ENCODE measurements at regions of chr6 and their contacts with region 1.

Region 1: DNA sequence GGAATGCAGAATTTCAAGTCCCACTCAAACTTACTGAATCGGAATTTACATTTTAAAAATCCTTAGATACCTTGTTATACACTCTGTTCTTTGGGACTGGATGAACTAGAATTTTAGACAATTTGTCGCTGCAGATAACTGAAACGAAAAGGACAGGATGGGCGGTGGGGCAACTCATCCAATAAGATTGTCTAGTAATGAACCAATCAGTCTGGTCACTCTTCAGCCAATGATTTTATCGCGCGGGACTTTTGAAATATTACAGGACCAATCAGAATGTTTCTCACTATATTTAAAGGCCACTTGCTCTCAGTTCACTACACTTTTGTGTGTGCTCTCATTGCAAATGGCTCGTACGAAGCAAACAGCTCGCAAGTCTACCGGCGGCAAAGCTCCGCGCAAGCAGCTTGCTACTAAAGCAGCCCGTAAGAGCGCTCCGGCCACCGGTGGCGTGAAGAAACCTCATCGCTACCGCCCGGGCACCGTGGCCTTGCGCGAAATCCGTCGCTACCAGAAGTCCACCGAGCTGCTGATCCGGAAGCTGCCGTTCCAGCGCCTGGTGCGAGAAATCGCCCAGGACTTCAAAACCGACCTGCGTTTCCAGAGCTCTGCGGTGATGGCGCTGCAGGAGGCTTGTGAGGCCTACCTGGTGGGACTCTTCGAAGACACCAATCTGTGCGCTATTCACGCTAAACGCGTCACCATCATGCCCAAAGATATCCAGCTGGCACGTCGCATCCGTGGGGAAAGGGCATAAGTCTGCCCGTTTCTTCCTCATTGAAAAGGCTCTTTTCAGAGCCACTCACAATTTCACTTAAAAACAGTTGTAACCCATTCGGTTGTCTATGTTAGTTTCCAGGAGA is 41.9 kb upstream of the HFE start:
- DNase-seq: peak; percentile 77
- H3K4me3 ChIP-seq: peak overlapping the region; percentile 57 to 60
- H3K27ac ChIP-seq: peak overlapping the region; percentile 79 to 97
- H3K4me1 ChIP-seq: peaks cover 0 to 12% of the 10 kb centered on the region in 2 experiments; a peak in 2 of 4 replicates
- H3K27me3 ChIP-seq: no peaks in the 10 kb centered on the region
- CTCF ChIP-seq: peak; percentile 37
- EP300 ChIP-seq: peak in 1 of 2 experiments; percentile 49; a peak in 1 of 4 replicates
- RAD21 ChIP-seq: no peak

Region 2: DNA sequence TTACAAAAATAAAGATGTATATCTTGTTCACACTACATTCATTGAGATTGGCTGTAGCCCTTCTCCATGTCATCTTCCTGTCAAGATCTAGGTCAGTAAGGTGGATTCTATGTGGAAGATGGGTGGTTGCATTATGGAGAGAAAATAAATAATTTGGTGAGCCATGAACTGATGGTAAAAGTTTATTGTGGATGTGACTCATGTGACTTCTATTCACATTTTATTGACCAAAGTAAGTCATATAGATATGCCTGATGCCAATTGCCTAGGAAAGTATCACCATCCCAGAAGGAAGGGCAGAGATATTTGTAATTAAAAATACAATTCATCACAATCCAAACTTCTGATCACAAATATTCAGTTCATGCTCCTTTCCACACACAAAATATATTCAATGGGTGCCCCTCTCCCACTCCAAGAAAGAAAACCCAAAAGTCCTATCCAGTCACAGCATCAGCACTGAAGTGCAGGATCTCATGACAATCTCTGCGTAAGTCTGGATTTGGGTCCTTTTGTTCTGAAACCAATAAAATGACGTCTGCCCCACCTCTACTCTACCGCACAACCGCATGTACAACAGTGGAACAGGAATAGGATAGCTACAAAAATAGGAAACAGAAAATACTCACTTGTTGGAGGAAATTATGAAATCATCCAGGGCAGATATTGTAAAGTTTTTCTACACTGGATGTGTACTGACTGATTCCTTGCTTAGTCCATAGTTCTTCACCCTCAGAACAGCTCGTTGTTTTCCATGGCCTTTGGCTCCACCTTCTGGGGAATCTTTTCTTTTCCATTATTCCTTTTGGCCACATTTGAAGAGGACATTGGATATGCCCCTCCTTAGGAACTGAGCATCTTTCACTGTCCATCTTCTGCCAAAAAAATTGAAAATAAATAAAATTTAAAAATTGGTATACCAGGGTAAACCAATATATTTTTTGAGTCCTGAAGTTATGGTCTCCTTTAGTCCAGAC is 155.1 kb before region 1 on chr6:
- CTCF ChIA-PET with region 1: no interaction called
- POLR2A ChIA-PET with region 1: no interaction called
- DNase-seq: peak; percentile 58
- H3K4me3 ChIP-seq: no peak overlapping the region; a peak in 1 of 4 replicates
- H3K27ac ChIP-seq: no peak overlapping the region
- H3K4me1 ChIP-seq: no peaks in the 10 kb centered on the region
- H3K27me3 ChIP-seq: no peaks in the 10 kb centered on the region
- CTCF ChIP-seq: peak; percentile 57
- EP300 ChIP-seq: no peak
- RAD21 ChIP-seq: peak; percentile 95

Region 3: DNA sequence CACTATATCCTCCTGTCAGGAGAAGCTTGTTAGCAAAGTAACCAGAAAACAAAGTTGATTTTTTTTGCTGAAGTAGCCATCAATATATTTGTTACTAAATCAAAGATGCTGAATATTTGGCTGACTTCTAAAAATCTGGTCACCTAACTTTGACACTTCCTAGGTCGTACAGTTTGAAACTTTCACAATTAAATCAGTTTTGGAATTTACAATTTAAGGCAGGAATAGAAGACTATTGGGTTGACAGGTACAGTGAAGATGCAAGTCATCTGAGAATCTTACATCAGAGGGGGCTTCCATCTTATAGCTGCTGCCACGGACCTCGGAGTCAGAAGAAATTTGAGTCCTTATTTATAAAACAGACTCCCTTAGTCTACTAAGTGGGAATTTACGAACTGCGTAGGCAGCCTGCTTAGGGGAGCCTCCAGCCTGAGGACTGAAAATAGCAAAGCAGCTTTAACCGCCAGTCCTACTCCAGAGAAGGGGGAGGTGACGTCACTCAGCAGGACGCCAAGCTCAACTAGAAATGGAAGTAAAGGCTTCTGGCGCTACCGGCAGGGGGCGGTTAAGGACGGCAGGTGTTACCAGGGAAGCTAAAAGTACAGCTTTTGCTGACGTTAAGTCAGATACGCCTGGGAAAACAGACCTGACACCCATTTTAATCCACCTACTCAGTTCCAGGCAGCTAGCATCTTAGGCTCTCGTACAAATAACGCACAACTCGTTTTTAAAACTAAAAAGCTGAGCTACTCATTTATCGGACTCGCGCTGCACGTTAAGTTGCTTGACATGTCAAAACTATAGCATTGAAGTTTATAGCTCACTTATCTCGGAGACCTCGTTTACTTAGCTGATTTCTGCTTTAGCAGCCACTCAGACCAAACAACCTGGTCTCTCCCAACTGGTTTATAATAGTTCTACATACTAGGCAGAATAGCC is 19.1 kb before region 1 on chr6:
- CTCF ChIA-PET with region 1: interaction called, 18 read pairs
- POLR2A ChIA-PET with region 1: interaction called, 166 read pairs
- DNase-seq: peak; percentile 59
- H3K4me3 ChIP-seq: peak overlapping the region; percentile 70 to 89
- H3K27ac ChIP-seq: peak overlapping the region; percentile 92 to 99
- H3K4me1 ChIP-seq: peaks cover 15 to 34% of the 10 kb centered on the region in 2 experiments; a peak in 3 of 4 replicates
- H3K27me3 ChIP-seq: no peaks in the 10 kb centered on the region
- CTCF ChIP-seq: peak; percentile 91
- EP300 ChIP-seq: peak in 1 of 2 experiments; percentile 22; a peak in 1 of 4 replicates
- RAD21 ChIP-seq: peak; percentile 24; the same call in 1 of the 2 replicates

Region 4: GRCh38 chr6:26156076-26156849 is 111.0 kb after region 1 on chr6:
- CTCF ChIA-PET with region 1: no interaction called
- POLR2A ChIA-PET with region 1: interaction called, 30 read pairs
- DNase-seq: peak; percentile 88
- H3K4me3 ChIP-seq: peak overlapping the region; percentile 82 to 90
- H3K27ac ChIP-seq: peak overlapping the region; percentile 88 to 97
- H3K4me1 ChIP-seq: no peaks in the 10 kb centered on the region; a peak in 3 of 4 replicates
- H3K27me3 ChIP-seq: no peaks in the 10 kb centered on the region
- CTCF ChIP-seq: no peak
- EP300 ChIP-seq: peak in 1 of 2 experiments; percentile 60; a peak in 1 of 4 replicates
- RAD21 ChIP-seq: no peak

Region 5: DNA sequence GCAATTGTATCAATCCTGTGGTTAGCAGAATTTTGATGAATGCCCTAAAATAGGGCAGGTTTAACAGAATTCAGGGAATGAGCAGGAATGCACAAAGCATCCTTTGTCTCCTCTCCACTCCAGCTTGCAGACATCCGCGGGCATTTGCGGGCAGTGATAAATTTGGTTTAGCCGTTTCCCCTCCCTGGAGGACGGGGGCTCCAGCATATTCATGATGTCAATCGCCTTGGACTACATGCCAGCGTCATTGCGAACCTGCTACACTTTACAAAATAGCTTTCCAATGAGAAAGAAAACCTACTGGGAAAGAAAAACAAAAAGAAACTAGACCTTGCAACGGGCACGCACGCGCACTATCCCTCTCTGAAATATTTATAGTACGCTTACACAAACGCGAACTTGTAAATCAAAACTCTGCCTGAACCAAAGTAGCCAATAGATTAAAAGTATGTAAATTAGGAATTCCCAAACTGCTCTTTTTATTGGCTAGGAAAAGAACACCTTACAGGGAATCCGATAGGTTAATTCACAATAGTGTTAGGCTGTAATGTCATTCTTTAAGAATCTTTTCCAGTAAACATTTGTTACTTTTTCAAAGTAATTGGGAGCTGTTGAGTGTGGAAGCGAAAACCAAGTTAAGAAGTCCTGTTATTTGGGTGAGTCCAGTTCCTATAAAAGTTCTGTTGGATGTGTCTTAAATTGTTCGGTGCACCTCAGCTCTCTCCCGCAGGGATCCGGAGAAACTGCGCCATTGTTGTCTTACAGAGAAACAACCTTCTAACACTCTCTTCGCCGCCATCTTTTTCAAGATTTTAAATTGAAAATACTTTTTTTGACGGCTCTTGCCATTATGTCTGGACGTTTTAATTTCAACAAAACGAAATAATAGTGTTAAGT is 178.6 kb after region 1 on chr6:
- CTCF ChIA-PET with region 1: no interaction called
- POLR2A ChIA-PET with region 1: interaction called, 11 read pairs
- DNase-seq: peak; percentile 36
- H3K4me3 ChIP-seq: peak overlapping the region; percentile 72 to 80
- H3K27ac ChIP-seq: peak overlapping the region; percentile 99 to 100
- H3K4me1 ChIP-seq: peaks cover 8 to 18% of the 10 kb centered on the region in 2 experiments; a peak in 3 of 4 replicates
- H3K27me3 ChIP-seq: no peaks in the 10 kb centered on the region
- CTCF ChIP-seq: no peak; the same call in 1 of the 2 replicates
- EP300 ChIP-seq: 0 out of 4 replicates have a peak, but pooled peaks of 1 of the 2 experiments have one; percentile 3
- RAD21 ChIP-seq: no peak

Region 6: DNA sequence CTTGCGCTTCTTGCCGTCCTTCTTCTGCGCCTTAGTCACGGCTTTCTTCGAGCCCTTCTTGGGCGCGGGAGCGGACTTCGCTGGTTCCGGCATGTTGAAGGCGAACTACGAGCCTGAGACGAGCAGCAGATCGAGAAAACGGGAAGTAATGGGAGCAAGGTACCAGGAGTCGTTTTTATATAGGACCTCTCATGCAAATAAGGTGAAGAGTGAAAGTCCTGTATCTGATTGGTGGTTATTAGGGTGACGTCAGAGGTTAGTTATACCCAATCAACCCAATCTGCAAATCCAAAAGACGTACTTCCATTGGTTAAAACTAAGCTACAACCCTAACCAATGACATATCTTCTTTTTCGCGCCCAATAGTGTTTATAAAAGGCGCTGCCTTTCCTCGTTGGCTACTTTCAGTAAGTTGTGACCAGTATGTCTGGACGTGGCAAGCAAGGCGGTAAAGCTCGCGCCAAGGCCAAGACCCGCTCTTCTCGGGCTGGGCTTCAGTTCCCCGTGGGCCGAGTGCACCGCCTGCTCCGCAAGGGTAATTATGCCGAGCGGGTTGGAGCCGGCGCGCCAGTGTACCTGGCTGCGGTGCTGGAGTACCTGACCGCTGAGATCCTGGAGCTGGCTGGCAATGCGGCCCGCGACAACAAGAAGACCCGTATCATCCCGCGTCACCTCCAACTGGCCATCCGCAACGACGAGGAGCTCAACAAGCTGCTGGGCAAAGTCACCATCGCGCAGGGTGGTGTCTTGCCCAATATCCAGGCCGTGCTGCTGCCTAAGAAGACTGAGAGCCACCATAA is 1101.6 kb after region 1 on chr6:
- CTCF ChIA-PET with region 1: no interaction called
- POLR2A ChIA-PET with region 1: interaction called, 11 read pairs
- DNase-seq: peak; percentile 91
- H3K4me3 ChIP-seq: peak overlapping the region; percentile 66 to 94
- H3K27ac ChIP-seq: peak overlapping the region; percentile 94 to 96
- H3K4me1 ChIP-seq: peaks cover 0 to 8% of the 10 kb centered on the region in 2 experiments; a peak in 2 of 4 replicates
- H3K27me3 ChIP-seq: no peaks in the 10 kb centered on the region
- CTCF ChIP-seq: no peak
- EP300 ChIP-seq: peak in 1 of 2 experiments; percentile 32; a peak in 1 of 4 replicates
- RAD21 ChIP-seq: no peak

Region 7: GRCh38 chr6:27871924-27872638 is 1826.8 kb after region 1 on chr6:
- CTCF ChIA-PET with region 1: no interaction called
- POLR2A ChIA-PET with region 1: interaction called, 30 read pairs
- DNase-seq: peak; percentile 91
- H3K4me3 ChIP-seq: peak overlapping the region; percentile 68 to 71
- H3K27ac ChIP-seq: peak overlapping the region; percentile 80 to 97
- H3K4me1 ChIP-seq: peaks cover 0 to 10% of the 10 kb centered on the region in 2 experiments; a peak in 3 of 4 replicates
- H3K27me3 ChIP-seq: no peaks in the 10 kb centered on the region
- CTCF ChIP-seq: peak; percentile 39
- EP300 ChIP-seq: no peak
- RAD21 ChIP-seq: no peak